ENCODE measurements at regions of chr2 and their contacts with region 1.

Region 1: GRCh38 chr2:30334762-30335363 is 103.5 kb downstream of the LBH start:
- DNase-seq: no peak
- ATAC-seq: peak; percentile 77
- H3K4me3 Mint-ChIP-seq: no peak overlapping the region
- H3K27ac Mint-ChIP-seq: no peak overlapping the region
- H3K4me1 Mint-ChIP-seq: peaks cover 18% of the 10 kb centered on the region
- H3K27me3 Mint-ChIP-seq: no peaks in the 10 kb centered on the region; the same call in 1 of the 2 replicates
- CTCF ChIP-seq: no peak

Region 2: DNA sequence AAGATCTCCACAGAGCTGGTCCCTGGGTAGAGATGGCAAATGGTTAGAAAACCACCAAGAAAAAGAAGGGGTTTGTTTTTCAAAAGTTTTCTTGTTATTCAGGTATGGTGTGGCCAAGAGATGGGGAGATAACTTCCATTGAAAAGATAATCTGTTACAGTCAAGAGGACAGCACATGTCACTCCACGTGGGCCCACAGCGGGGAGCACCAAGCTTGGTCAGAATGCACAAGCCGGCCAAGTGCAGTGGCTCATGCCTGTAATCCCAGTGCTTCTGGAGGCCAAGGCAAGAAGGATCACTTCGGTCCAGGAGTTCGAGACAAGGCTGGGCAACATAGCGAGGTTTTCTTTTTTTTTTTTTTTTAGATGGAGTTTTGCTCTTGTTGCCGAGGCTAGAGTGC is 106.2 kb after region 1 on chr2:
- CTCF ChIA-PET with region 1: interaction called, 10 read pairs
- POLR2A ChIA-PET with region 1: no interaction called
- DNase-seq: no peak
- ATAC-seq: no peak
- H3K4me3 Mint-ChIP-seq: no peak overlapping the region
- H3K27ac Mint-ChIP-seq: no peak overlapping the region
- H3K4me1 Mint-ChIP-seq: peaks cover 8% of the 10 kb centered on the region
- H3K27me3 Mint-ChIP-seq: no peaks in the 10 kb centered on the region; the same call in 1 of the 2 replicates
- CTCF ChIP-seq: no peak

Measured in WTC11 (cell line).